ENCODE measurements at regions of chr7 and their contacts with region 1.

Region 1: DNA sequence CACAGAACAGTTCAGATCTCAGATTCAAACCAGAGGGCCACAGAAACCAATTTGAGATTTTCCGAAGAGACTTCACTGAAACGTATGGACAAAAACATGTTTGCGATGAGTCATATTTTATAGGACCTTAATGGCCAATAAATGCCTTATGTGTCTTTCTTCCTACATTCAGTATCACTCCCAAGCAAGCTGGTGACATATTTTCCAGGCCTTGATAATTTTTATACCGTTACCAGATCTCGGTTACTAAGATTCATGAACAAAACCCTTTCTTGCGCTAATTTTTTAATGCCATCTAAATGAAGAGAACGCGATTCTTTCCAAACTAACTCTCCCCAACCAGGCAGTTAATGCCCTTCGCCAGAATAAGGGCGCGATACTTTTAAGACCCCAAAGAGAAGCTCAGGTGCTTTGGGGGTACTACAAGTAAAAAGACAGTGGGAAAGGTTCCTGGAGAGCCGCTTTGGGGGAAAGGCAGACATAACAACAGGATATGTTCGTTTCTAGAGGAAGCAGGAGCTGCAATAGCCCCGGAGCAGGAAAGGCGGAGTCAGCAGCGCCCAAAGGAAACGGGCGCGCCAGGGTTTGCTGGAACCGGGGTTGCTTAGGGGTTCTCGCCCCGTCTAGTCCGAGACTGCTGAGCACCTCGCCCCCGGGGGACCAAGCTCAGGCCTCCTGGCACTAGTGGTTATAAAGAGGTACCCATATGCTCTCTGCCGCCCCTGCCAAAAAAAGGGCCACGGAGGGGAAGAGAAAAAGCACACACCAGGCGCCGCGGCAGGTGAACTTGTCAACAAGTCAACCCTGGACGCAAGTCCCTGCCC is 884 bp downstream of the ICA1 start:
- DNase-seq: peak; percentile 9
- H3K4me3 Mint-ChIP-seq: peak overlapping the region; percentile 80
- H3K27ac Mint-ChIP-seq: peak overlapping the region; percentile 39
- H3K4me1 Mint-ChIP-seq: peaks cover 6% of the 10 kb centered on the region
- H3K27me3 Mint-ChIP-seq: peaks cover 58% of the 10 kb centered on the region

Region 2: DNA sequence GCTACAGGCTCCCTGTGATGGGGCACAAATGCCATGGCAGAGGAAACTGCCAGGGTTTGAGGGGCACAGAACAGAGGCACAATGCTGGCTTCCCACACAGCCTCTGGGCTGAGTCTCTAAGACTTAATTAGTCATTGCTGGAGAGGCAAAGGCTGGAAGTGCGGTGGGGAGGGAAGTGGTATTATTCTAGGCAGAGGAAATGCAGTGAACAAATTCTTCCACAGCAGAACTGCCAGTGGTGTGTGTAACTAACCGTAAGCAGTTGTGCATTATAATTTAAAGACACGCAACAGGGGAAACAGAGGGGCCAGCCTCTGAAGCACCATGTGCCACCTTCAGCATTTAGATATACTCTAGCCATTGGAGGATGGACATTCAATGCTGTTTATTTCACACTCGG is 12.0 kb before region 1 on chr7:
- intact Hi-C with region 1: loop called (anchors 1 kb)
- DNase-seq: no peak
- H3K4me3 Mint-ChIP-seq: no peak overlapping the region
- H3K27ac Mint-ChIP-seq: no peak overlapping the region
- H3K4me1 Mint-ChIP-seq: peaks cover 3% of the 10 kb centered on the region
- H3K27me3 Mint-ChIP-seq: peaks cover 18% of the 10 kb centered on the region

Region 3: GRCh38 chr7:8781166-8781565 is 520.1 kb after region 1 on chr7:
- intact Hi-C with region 1: no loop called
- DNase-seq: no peak
- H3K4me3 Mint-ChIP-seq: no peak overlapping the region
- H3K27ac Mint-ChIP-seq: no peak overlapping the region
- H3K4me1 Mint-ChIP-seq: no peaks in the 10 kb centered on the region
- H3K27me3 Mint-ChIP-seq: no peaks in the 10 kb centered on the region

Measured in activated T-helper 2 cell treated with anti-CD3 and anti-CD28 coated beads, Interferon-gamma antibody, Interleukin-2, Interleukin-4, amounts not matched to agents 10 μg/mL and 5 μg/mL and 100 μg/mL, durations not matched to agents 14 hours and 24 hours and 36 hours (primary cell).